Activated naive CD4-positive, alpha-beta T cell treated with anti-CD3 and anti-CD28 coated beads, Interleukin-2, amount 10 ng/mL, durations not matched to agents 7 days and 5 days (primary cell): ENCODE measurements at regions of chr14 and their contacts with region 1.

Region 1: DNA sequence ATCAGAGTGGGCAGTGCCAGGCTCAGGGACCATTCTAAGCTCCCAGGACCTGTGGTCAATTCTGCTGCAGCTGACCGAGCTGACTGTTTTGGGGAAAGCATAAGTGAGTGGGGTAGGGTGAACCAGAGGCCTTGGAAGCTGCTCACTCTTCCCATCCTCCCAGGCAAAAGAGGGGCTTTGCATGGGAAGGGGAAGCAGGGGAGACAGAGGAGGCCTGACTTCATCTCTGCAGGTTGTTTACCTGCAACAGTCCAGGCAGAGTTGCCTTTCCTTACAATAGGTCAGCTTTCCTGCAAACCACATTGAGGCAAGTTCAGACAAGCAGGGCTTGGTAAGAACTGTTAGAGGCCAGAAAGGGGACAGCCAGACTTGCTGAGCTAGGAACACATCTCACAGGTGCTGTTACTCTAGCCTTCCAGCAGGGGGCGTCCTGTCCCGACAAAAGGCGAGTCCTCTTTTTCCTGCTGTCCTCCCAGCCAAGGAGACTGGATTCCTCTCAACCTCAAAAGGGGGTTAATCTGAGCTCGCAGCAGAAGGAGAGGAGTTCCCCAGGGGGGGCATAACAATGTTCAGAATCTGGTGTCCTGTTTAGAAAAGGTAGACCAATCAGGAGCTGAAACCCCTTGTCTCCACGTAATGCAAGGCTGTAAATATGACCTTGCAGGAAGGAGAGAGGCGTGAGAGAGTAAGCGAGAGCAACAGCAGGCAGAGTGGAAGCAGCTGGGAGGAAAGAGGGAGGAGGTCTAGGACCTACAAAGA is 4.3 kb upstream of the DHRS2 start:
- DNase-seq: peak; percentile 71
- H3K4me3 Mint-ChIP-seq: no peak overlapping the region
- H3K27ac Mint-ChIP-seq: no peak overlapping the region
- H3K4me1 Mint-ChIP-seq: peaks cover 5% of the 10 kb centered on the region
- H3K27me3 Mint-ChIP-seq: peaks cover 25% of the 10 kb centered on the region

Region 2: DNA sequence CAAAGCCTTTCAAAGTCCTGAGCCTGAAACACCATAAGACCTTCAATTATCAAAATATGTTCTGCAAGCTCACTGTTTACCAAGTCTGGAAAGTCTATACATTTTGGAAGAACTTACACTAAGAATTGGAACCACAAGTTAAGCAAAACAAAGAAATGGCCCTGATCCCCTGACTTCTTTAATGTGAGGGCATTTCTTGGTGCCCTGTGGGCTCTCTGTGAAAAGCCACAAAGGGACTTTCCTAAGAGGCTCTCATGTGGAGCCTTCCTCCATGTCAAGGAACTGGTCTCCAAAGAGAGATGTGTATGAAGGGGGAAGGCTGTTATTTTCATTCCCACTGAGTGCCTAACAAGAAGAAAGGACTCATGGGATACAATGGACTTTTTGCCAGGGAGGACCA is 210.3 kb before region 1 on chr14:
- CTCF ChIA-PET with region 1: no interaction called
- DNase-seq: no peak
- H3K4me3 Mint-ChIP-seq: no peak overlapping the region
- H3K27ac Mint-ChIP-seq: peak overlapping the region; percentile 12
- H3K4me1 Mint-ChIP-seq: peaks cover 17% of the 10 kb centered on the region
- H3K27me3 Mint-ChIP-seq: peaks cover 27% of the 10 kb centered on the region

Region 3: GRCh38 chr14:23605931-23606585 is 25.8 kb before region 1 on chr14:
- CTCF ChIA-PET with region 1: interaction called, 39 read pairs
- DNase-seq: no peak
- H3K4me3 Mint-ChIP-seq: no peak overlapping the region
- H3K27ac Mint-ChIP-seq: no peak overlapping the region
- H3K4me1 Mint-ChIP-seq: peaks cover 19% of the 10 kb centered on the region
- H3K27me3 Mint-ChIP-seq: peaks cover 7% of the 10 kb centered on the region

Region 4: DNA sequence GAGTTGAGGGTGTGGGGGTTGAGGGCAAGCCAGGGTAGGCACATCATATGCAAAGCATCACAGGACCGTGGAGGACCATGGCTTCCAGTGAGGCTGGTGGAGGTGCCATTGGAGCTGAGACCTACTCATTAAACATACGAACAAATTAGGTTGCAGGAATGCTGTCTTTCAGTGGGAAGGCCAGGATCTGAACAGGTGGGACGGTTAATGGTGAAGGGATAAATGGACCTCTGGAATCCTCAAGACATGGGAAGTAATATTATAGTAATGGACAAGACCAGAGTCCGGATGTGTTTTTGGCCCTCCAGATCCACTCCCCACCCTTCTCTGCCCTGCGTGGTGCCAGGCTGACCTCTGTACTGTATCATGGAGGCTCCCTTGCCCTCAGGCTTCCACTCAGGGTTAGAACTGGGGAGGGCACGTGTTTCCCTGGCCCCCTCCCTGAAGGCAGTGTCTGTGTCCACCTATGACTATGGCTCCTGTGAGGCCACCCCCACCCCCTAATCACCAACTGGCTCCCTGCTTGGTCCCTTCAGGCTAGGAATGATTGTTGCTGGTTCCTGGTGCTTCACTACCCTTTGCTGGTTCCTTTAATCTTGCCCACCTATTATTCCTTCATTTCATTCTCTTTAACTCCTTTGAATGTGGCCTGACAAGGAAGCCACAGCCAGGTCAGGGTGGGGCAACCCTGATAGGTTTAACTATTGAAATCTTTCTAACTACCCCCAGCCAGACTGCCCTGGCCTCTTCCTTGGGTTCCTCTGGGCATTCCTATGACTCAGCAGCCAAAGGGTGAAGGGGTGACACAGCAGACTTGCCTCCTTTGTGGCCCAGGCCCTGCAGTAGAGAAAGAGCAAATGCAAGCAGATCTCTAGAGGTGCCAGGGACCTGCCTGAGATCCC is 15.0 kb after region 1 on chr14:
- CTCF ChIA-PET with region 1: interaction called, 19 read pairs
- DNase-seq: no peak
- H3K4me3 Mint-ChIP-seq: no peak overlapping the region
- H3K27ac Mint-ChIP-seq: no peak overlapping the region
- H3K4me1 Mint-ChIP-seq: no peaks in the 10 kb centered on the region
- H3K27me3 Mint-ChIP-seq: peaks cover 10% of the 10 kb centered on the region

Region 5: DNA sequence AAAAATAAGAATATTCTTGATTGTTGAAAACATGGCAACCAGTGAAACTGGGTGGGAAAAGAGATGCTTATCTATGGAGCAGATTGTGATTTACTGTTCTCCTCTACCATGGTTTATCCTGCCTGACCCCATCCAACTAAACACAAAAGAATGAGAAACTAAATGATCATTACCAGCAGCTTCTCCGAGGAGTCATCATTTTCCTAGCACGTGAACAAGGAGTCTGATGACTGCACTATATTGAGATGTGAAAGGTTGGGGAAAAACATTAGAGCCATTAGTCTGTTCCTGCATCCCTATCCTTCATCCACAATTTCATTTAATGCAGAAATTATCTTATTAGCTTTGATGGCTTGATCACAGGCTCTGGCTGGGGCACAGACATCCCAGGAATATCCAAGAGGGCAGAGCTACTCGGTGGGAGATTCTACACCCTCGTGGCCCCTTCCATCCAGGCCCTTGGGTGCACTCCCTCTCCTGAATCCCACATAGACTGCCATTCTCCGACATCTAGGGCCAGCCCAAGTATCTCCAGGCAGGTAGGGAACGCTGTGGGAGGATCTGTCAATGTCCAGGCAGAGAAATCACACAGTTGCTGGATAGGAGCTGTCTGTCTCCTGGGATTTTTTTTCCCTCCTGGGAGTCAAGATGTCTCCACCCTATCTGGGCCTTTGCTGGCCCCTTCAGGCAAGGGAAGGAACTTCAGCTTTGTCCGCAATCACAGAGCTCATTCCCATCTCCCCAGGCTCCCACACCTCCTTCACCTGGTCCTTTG is 278.4 kb after region 1 on chr14:
- CTCF ChIA-PET with region 1: interaction called, 17 read pairs
- DNase-seq: peak; percentile 26
- H3K4me3 Mint-ChIP-seq: no peak overlapping the region
- H3K27ac Mint-ChIP-seq: no peak overlapping the region
- H3K4me1 Mint-ChIP-seq: no peaks in the 10 kb centered on the region
- H3K27me3 Mint-ChIP-seq: peaks cover 32% of the 10 kb centered on the region